ENCODE measurements at regions of chr11 and their contacts with region 1.

Region 1: GRCh38 chr11:75445315-75445953 is 12.4 kb upstream of the KLHL35 start:
- DNase-seq: no peak
- H3K4me3 ChIP-seq: no peak overlapping the region
- H3K27ac ChIP-seq: no peak overlapping the region
- H3K27me3 ChIP-seq: peaks cover 35% of the 10 kb centered on the region
- CTCF ChIP-seq: peak; percentile 98

Region 2: DNA sequence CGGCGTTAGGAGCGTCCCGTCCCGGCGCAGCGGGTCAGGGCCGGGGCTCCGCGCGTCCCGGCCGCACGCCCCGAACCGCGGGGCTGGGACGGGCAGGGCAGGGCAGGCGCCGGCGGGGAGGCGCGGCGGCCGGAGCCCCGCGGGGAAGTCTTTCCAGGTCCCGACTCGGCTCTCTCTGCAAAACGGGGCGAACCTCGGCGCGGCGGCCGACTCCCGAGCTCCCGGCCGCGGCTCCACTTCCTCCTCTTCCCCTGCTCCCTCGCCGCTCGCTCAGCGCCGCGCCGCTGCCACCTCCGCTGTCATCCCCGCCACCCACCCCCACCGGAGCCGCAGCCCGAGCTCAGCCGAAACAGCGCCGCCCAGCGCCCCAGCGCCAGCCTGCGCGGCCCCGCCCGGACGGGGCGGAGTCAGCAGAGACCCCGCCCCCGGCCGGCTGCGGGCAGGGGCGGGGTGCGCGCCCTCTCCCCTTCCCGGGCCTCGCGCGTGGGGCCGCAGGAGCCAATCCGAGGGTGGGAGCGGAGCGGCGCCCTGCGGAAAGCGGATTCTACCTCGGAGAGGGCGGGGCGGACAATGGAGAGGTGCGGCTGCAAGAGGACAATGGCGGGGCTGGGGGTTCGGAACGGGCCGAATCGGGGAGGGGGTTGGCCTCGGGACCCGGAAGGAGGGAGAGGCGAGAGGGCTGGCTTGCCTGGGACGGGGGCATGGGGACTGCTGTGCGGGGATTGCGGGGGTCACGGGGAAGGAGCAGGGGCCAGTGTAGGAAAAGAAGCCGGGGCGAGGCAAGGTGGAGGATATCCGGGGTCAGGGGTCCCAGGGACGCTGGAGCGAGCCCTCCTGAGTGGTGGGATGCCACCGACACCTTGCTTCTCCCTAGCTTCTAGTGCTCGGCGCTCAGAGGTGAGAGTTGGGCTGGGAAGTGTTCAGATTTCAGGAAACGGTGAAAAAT is 80.4 kb after region 1 on chr11 and contains the start of gene GDPD5:
- CTCF ChIA-PET with region 1: interaction called, 182 read pairs
- POLR2A ChIA-PET with region 1: no interaction called
- DNase-seq: no peak
- H3K4me3 ChIP-seq: peak within 1 kb of the TSS; percentile 73
- H3K27ac ChIP-seq: no peak within 1 kb of the TSS
- H3K27me3 ChIP-seq: peaks cover 40% of the 10 kb centered on the region
- CTCF ChIP-seq: peak; percentile 42
- polyA plus RNA-seq, gene GDPD5: 1.4 and 1.9 TPM in 2 replicates

Region 3: DNA sequence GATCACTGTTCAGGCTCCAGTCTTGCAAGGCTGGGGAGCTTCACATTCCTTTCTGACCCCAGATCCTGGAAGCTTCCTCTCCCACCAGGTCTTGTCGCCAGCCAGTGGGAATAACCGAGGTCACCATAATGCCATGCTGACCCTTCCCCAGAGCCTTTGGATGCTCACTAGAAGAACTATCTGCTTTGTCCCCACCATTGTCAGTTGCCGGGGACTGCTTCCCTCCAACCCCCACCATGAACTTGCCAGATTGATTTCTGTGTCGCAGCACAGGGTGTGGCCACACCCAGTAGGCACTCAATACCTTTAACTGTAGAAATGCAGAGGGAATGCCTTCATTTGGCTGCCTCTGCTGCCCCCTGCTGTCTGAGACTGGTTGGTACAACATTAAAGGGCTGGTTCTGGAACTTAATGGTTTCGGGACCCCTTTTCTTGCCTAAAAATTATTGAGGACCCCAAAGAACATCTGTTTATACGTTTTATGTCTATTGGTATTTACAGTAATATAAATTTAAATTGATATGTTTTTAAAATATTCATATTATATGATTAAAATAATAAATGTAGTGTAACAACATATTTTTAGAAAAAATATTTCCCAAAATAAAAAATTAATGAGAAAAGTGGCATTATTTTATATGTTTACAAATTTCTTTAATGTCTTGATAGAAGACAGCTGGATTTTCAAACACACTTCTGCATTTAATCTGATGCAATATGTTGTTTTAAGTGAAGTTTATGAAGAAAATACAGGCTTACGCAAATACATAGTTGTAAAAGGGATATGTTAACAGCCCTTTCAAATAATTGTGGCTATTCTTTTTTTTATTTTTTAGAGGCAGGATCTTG is 87.0 kb after region 1 on chr11:
- CTCF ChIA-PET with region 1: interaction called, 182 read pairs
- POLR2A ChIA-PET with region 1: no interaction called
- DNase-seq: no peak
- H3K4me3 ChIP-seq: no peak overlapping the region
- H3K27ac ChIP-seq: no peak overlapping the region
- H3K27me3 ChIP-seq: peaks cover 17% of the 10 kb centered on the region
- CTCF ChIP-seq: peak; percentile 89

Region 4: DNA sequence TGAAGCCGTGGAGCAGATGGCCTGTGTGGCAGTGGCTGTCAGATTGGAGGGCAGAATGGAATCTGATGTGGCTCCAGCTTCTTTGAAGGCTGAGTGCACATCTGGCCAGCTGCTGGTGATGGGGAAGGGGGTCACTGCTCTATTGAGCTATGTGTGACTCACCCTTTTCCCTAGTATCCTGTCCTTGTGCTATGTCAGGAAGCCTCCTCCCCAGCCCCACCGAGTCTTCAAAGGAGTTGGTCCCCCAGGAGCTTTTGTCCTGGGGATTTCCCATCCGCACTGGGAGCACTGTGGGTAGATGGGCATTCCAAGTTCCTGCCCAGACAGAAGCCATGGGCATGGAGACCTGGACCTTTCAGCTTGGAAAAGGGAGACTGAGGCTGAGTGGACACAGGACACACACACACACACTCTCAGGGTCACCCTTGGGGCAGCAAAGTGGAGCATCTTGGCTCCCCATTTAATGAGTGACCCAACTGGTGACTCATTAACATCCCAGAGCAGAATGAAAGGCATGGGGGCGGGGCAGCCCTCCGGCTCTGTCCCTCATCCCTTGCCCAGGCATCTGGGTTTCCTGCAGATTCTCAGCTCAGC is 119.9 kb after region 1 on chr11:
- CTCF ChIA-PET with region 1: no interaction called
- POLR2A ChIA-PET with region 1: no interaction called
- DNase-seq: no peak
- H3K4me3 ChIP-seq: peak overlapping the region; percentile 77
- H3K27ac ChIP-seq: peak overlapping the region; percentile 97
- H3K27me3 ChIP-seq: no peaks in the 10 kb centered on the region
- CTCF ChIP-seq: no peak

Measured in AG04450 (cell line).